ENCODE measurements at regions of chr5 and their contacts with region 1.

Region 1: GRCh38 chr5:178551059-178551458 is 39.1 kb downstream of the COL23A1 start:
- DNase-seq: no peak
- ATAC-seq: no peak

Region 2: GRCh38 chr5:178288381-178289368 is 262.4 kb before region 1 on chr5:
- intact Hi-C with region 1: loop called in 1 of 2 experiments (anchors 5 kb)
- DNase-seq: peak; percentile 37
- ATAC-seq: no peak

Region 3: DNA sequence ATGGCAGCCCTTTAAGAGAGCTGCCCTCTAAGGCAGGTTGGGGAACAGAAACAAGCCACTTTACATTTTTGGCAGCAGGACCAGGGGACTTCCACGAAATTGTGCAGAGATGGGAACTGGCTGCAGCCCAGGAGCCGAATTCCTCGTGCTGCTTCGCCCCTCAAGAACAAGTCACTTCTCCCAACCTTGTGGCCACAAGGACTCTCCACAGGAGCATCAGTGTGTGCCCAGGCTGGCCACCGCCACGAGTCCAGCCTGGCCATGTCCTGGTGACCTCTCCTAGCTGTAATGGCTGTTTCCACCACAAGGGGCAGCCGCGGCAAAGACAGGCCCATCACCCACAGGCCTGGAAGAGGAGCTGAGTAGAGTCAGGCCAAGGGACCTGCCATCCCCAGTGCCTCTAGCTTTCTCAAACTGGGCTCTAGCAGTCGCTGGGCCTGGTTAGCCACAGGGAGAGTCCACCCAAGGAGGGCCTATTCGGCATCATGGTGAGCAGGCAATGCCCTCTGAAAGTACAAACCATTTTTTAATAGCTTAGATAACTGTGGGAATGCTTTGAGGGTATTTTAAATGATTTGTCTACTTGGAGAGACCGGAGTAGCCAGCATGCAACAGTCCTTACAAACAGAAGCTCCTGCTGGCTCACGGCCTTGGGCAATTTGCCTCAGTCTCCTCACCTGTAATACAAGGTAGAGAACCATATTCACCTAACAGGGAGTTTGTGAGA is 89.9 kb before region 1 on chr5:
- intact Hi-C with region 1: loop called in 1 of 2 experiments (anchors 5 kb)
- DNase-seq: peak; percentile 85
- ATAC-seq: peak; percentile 97 to 99

Region 4: DNA sequence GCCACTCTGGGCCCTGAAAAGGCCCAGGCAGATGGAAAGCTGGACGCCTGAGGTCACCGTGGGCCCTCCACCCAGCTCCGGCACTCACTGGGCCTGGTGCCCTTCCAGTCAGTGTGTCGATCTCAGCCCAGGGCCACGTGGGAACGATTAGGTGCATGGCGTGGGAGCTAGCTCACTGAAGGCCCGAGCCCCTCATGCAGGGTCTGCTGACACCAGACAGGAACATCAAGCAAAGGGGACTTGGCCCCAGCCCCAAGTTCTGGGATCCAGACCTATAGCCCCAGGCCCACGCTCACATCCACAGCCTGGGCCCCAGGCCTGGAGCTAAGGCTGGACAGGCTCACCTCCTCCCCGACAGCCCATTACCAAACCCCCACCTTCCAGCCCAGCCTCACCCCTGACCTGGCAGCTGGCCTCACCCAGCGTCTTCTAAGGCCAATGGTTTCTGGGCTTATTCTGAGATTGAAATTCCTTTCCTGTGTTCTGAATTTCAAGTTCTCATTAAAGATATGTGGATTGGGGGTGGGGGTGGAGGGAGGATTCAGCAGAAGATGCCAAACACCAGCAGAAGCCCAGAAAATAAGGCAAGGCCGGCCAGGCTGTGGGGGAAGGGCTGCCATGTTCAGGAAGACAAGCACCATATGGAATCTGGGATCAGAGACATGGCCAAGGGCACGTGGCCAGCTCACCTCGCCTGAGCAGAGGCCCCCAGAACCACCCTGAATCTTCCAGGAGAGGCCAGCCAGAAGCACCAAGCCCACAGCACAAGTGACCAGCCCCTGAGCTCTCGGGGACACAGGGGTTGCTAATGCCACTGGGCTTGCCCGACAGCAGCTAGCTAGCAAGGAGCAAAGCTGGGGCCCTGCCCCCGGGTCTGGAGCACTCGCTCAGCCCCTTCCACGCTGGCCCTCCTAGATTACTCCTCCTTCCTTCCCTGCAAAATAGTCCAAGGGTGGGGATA is 719.9 kb after region 1 on chr5:
- intact Hi-C with region 1: no loop called
- DNase-seq: peak; percentile 42
- ATAC-seq: peak; percentile 6 to 60